ENCODE measurements at regions of chr1 and their contacts with region 1.

Region 1: DNA sequence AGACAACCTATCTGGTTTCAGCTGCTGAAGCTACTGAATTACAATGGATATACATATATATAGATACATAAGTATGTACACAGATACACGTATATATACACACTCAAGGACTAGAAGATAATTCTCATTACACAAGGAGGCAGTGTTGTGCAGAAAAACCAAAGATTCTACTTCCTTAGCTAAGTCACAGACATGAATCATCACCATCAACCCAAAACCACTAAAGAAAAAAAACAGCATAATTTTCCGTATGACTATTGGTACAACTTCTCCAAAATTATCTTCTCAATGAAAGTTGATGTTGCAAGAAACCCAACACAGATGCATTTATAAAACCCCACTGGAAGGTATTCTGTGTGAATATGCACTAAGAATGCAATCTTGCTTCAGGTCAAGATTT is 36.8 kb upstream of the RPF1 start:
- DNase-seq: no peak
- ATAC-seq: peak; percentile 94
- H3K4me3 Mint-ChIP-seq: no peak overlapping the region
- H3K27ac Mint-ChIP-seq: peak overlapping the region; percentile 26
- H3K4me1 Mint-ChIP-seq: peaks cover 12% of the 10 kb centered on the region
- H3K27me3 Mint-ChIP-seq: peaks cover 3% of the 10 kb centered on the region
- CTCF ChIP-seq: peak; percentile 80

Region 2: DNA sequence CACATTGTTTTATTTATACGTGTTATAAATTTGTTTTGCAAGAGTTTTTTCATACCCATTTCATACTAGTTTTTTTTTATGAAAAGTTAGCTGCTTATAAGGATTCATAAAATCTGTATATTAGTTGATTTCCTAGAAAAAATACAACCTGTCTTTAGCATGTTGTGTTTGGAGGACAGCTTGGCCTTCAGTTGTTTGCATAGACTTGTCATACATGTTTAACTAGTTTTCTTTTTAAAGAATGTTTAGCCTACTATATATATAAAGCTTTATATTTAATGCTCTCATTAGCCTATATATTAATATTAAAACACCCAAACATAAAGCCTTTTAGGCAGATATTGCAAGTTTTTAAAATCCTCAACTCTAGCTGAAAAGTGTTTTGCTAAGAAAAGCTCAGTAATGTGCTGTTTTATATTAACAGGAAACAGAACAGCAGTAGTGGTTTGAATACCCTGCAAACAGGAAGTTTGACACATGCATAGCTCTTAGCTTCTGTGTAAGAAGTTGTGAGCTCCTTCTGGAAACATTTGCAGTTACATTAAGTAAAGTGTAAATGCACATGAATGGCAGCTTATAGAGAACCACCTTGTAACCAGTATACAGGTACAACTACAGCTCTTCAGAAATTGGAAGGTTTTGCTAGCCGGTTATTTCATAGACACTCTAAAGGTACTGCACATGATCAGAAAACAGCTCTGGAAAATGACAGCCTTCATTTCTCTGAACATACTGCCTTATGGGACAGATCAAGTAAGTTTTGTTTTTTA is 298.3 kb before region 1 on chr1 and contains the start of gene PRKACB:
- CTCF ChIA-PET with region 1: interaction called, 157 read pairs
- POLR2A ChIA-PET with region 1: no interaction called
- intact Hi-C with region 1: no loop called
- DNase-seq: no peak
- ATAC-seq: peak; percentile 89
- H3K4me3 Mint-ChIP-seq: peak within 1 kb of the TSS; percentile 83
- H3K27ac Mint-ChIP-seq: peak within 1 kb of the TSS; percentile 99
- H3K4me1 Mint-ChIP-seq: peaks cover 30% of the 10 kb centered on the region
- H3K27me3 Mint-ChIP-seq: no peaks in the 10 kb centered on the region
- CTCF ChIP-seq: no peak
- total RNA-seq, gene PRKACB: 39.9 to 44.7 TPM

Region 3: DNA sequence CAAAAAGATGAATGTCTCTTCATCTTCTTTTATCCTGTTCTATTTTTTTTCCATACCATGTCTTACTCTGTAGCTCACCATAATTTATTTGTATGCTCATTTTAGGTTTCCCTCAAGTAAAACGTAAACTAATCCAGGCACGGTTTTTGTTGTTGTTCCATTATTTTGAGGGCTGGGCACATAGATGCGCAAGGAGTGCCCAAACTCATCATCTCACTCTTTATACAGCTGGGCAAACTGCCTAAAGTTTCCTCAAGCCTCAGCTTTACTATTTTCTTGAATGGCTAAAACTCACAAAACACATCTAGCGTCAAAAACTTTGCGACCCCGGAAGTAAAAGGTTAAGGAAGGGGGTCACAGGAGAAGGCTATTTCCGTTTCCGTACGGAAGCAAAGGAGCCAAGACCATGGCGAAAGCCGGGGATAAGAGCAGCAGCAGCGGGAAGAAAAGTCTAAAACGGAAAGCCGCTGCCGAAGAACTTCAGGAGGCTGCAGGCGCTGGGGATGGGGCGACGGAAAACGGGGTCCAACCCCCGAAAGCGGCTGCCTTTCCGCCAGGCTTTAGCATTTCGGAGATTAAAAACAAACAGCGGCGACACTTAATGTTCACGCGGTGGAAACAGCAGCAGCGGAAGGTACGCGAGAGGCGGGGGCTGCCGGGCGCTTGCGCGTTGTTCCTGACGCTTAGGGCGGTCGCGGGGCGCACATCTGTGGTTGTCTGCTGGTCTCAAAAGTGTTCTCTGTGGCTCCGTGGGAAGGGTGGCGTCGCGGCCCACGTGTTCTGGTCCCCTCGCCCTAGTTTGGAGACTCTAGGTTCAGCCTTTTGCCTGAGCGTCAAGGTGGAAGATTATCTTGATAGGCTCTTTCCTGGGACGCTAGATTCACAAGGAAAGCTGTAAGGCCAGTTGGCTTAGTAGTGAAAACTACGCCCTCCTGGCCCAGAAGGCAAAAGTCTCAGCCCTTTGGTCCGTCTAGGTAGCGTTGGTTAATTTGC is 36.9 kb after region 1 on chr1 and contains the start of gene RPF1:
- CTCF ChIA-PET with region 1: interaction called, 17 read pairs
- POLR2A ChIA-PET with region 1: no interaction called
- intact Hi-C with region 1: loop called (anchors 5 kb)
- DNase-seq: peak; percentile 87
- ATAC-seq: peak; percentile 95
- H3K4me3 Mint-ChIP-seq: peak within 1 kb of the TSS; percentile 99
- H3K27ac Mint-ChIP-seq: peak within 1 kb of the TSS; percentile 99
- H3K4me1 Mint-ChIP-seq: peaks cover 38% of the 10 kb centered on the region
- H3K27me3 Mint-ChIP-seq: peaks cover 16% of the 10 kb centered on the region
- CTCF ChIP-seq: no peak
- total RNA-seq, gene RPF1: 61.9 to 64.1 TPM

Region 4: DNA sequence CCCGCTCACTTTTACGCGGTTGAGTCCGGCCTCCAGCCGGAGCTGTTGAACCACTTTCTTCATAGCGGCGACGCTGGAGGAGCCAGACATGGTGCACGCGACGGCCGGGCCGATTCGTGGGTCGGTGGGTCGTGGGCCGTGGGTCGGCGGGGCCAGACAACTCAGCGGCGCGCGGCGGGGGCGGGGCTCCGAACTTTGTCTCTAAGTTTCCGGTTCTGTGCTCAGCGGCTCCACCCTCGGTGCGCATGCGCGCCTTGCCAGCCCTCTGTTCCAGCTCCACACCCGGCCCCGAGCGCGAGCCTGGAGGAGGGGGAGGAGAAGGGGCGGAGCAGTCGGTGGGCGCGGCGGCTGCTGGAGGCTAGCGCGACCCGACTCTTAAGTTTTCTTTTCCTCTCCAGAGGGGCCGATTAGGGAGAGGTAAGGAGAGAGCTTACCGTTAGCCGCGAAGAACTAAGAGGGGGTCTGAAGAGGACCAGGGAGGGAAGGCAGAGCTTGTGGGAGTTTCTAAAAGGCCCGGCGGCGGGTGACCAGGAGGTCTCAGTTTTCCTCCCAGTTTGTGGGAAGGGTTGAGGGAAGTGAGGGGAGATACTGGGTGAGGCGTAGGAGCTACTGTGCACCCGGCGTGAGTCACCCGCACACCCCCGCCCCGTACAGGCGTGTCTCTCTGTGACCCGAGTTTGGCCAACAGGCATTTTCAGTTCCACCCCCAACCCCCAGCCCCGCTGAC is 63.9 kb after region 1 on chr1 and contains the starts of genes GNG5 and SPATA1:
- CTCF ChIA-PET with region 1: interaction called, 11 read pairs
- POLR2A ChIA-PET with region 1: interaction called, 5 read pairs
- intact Hi-C with region 1: loop called (anchors 5 kb)
- DNase-seq: peak; percentile 99
- ATAC-seq: peak; percentile 90
- H3K4me3 Mint-ChIP-seq: peak within 1 kb of the TSS; percentile 99
- H3K27ac Mint-ChIP-seq: peak within 1 kb of the TSS; percentile 99
- H3K4me1 Mint-ChIP-seq: peaks cover 27% of the 10 kb centered on the region
- H3K27me3 Mint-ChIP-seq: no peaks in the 10 kb centered on the region
- CTCF ChIP-seq: no peak
- total RNA-seq, gene GNG5: 101 to 106 TPM
- total RNA-seq, gene SPATA1: 2.5 to 3.0 TPM

Region 5: DNA sequence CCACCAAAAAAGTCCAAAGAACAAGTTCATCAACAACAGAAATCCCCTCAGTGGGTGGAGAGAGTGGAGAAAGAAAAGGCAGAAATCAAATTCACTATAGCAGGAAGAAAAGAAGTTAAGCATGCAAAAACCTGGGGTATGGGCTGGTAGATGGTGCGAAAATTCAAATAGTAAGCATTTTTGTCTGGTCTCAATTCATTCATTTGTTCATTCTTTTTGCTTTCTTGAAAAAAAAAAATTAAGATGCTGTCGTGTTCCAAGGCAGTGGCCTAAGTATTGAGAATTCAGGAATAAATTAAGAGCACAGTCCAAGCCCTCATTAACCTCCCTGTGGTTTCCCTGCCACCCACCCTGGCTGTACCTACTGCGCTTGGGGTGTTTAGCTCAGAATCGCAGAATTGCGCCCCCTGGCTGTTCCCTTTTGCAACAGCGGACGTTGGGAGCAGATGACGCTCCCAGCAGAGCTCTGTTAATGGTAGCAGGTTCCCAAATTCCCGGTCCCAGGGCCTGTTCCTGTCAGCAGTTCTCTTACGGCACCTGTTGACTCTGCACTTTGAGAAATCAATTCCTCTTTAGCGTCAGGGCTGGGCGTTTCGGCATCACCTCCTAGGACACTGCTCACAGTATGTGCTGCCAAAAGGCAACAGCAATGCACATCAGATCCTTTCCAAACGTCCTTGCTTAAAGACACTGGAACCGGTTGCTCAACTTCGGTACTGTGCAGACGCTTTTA is 282.0 kb after region 1 on chr1:
- CTCF ChIA-PET with region 1: interaction called, 12 read pairs
- POLR2A ChIA-PET with region 1: no interaction called
- intact Hi-C with region 1: no loop called
- DNase-seq: peak; percentile 68
- ATAC-seq: peak; percentile 75
- H3K4me3 Mint-ChIP-seq: no peak overlapping the region
- H3K27ac Mint-ChIP-seq: no peak overlapping the region
- H3K4me1 Mint-ChIP-seq: peaks cover 9% of the 10 kb centered on the region
- H3K27me3 Mint-ChIP-seq: no peaks in the 10 kb centered on the region
- CTCF ChIP-seq: peak; percentile 78

Region 6: GRCh38 chr1:84772428-84772943 is 330.2 kb after region 1 on chr1:
- CTCF ChIA-PET with region 1: interaction called, 7 read pairs
- POLR2A ChIA-PET with region 1: no interaction called
- intact Hi-C with region 1: loop called (anchors 5 kb)
- DNase-seq: peak; percentile 81
- ATAC-seq: peak; percentile 71
- H3K4me3 Mint-ChIP-seq: no peak overlapping the region
- H3K27ac Mint-ChIP-seq: no peak overlapping the region
- H3K4me1 Mint-ChIP-seq: no peaks in the 10 kb centered on the region
- H3K27me3 Mint-ChIP-seq: peaks cover 2% of the 10 kb centered on the region
- CTCF ChIP-seq: peak; percentile 95